ENCODE measurements at regions of chr10 and their contacts with region 1.

Region 1: DNA sequence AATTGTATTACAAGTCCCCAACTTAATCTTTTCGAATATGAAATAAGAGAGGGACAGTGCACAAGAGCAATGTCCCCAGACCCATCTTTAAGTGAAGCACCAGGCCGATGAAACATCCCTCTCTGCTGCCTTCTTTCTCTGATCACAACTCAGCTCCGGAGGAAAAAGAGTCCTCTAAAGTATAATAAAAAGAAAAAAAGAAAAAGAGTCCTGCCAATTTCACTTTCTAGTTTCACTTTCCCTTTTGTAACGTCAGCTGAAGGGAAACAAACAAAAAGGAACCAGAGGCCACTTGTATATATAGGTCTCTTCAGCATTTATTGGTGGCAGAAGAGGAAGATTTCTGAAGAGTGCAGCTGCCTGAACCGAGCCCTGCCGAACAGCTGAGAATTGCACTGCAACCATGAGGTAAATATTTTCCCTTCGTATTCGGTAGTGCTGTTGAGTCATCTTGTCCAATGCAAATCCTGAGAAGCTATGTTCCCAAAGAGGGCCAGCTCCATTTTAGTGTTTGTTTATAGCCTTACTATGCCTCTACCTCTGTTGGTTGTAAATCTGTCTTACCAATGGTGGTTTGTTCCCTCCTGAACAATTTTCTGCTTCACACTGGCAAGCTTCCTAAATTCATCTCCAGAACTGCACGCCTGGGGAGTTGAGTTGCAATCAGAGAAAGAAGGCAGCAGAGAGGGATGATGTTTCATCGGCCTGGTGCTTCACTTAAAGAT is at the start of gene IFIT2:
- DNase-seq: peak; percentile 52 to 70 (median 62)
- H3K4me3 ChIP-seq: peak within 1 kb of the TSS; percentile 63 to 69
- H3K4me3 Mint-ChIP-seq: peak within 1 kb of the TSS; percentile 90 to 98 (median 94)
- H3K27ac ChIP-seq: peak within 1 kb of the TSS; percentile 75
- H3K27ac Mint-ChIP-seq: peak within 1 kb of the TSS; percentile 96 to 99 (median 98)
- H3K4me1 ChIP-seq: peaks cover 30% of the 10 kb centered on the region
- H3K4me1 Mint-ChIP-seq: peaks cover 22 to 40% (median 28%) of the 10 kb centered on the region in 4 donors
- H3K27me3 ChIP-seq: no peaks in the 10 kb centered on the region
- H3K27me3 Mint-ChIP-seq: no peaks in the 10 kb centered on the region
- total RNA-seq, gene IFIT2: 10.4 to 10.7 TPM

Region 2: DNA sequence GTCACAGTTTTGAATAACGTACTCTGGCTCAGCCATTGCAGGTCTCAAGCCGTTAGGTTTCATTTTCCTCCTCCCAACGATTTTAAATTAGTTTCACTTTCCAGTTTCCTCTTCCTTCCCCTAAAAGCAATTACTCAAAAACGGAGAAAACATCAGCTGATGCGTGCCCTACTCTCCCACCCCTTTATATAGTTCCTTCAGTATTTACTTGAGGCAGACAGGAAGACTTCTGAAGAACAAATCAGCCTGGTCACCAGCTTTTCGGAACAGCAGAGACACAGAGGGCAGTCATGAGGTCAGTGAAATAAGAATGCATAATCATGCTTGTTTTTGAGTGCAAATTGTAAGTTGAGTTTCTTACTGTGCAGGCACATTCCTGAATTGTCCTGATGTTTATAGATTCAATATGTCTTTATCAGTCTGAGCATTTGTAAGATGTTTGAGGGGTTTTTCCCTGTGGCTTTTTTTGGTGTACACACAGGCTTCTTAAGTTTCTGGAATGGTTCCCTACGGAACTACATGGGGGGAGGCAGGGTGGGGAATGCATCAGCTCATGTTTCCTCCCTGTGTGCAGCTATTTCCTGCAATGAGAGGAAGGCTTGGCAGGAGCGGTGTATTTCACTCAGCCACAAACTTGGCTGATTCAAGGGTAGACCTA is 26.0 kb after region 1 on chr10 and contains the start of gene IFIT3:
- CTCF ChIA-PET with region 1: interaction called, 6 read pairs
- POLR2A ChIA-PET with region 1: interaction called, 16 read pairs
- intact Hi-C with region 1: loop called (anchors 1 kb)
- DNase-seq: peak in 4 of 5 donors; percentile 26 to 37 (median 36)
- H3K4me3 ChIP-seq: peak within 1 kb of the TSS; percentile 24 to 55
- H3K4me3 Mint-ChIP-seq: peak within 1 kb of the TSS; percentile 80 to 97 (median 92)
- H3K27ac ChIP-seq: peak within 1 kb of the TSS; percentile 27
- H3K27ac Mint-ChIP-seq: peak within 1 kb of the TSS; percentile 24 to 96 (median 85)
- H3K4me1 ChIP-seq: peaks cover 50% of the 10 kb centered on the region
- H3K4me1 Mint-ChIP-seq: peaks cover 36 to 61% (median 42%) of the 10 kb centered on the region in 4 donors
- H3K27me3 ChIP-seq: no peaks in the 10 kb centered on the region
- H3K27me3 Mint-ChIP-seq: peaks cover 0 to 4% of the 10 kb centered on the region in 2 donors
- total RNA-seq, gene IFIT3: 3.1 to 3.3 TPM

Region 3: DNA sequence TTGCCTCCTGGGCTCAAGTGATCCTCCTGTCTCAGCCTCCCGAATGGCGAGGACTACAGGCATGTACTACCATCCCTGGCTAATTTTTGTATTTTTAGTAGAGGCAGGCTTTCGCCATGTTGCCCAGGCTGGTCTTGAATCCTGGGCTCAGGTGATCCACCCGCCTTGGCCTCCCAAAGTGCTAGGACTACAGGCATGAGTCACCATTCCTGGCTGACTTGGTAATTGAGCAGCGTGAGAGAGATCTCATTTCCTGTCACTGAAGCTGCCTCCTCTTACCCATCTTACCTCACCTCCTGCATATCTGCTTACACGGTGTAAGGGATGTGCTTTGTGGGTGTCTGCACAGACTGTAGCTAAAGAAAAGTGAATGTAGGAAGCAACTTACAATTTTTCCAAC is 35.6 kb after region 1 on chr10:
- CTCF ChIA-PET with region 1: interaction called, 6 read pairs
- POLR2A ChIA-PET with region 1: interaction called, 10 read pairs
- intact Hi-C with region 1: no loop called
- DNase-seq: peak in 3 of 5 donors; percentile 20 to 71 (median 24)
- H3K4me3 ChIP-seq: no peak overlapping the region
- H3K4me3 Mint-ChIP-seq: peak overlapping the region in 2 of 8 donors; percentile 40 to 48
- H3K27ac ChIP-seq: no peak overlapping the region
- H3K27ac Mint-ChIP-seq: peak overlapping the region in 5 of 7 donors; percentile 66 to 82 (median 81)
- H3K4me1 ChIP-seq: peaks cover 45% of the 10 kb centered on the region
- H3K4me1 Mint-ChIP-seq: peaks cover 27 to 45% (median 39%) of the 10 kb centered on the region in 4 donors
- H3K27me3 ChIP-seq: no peaks in the 10 kb centered on the region
- H3K27me3 Mint-ChIP-seq: no peaks in the 10 kb centered on the region

Region 4: GRCh38 chr10:89391917-89392756 is 90.3 kb after region 1 on chr10 and contains the start of gene IFIT1:
- CTCF ChIA-PET with region 1: interaction called, 8 read pairs
- POLR2A ChIA-PET with region 1: interaction called, 23 read pairs
- intact Hi-C with region 1: loop called (anchors 1 kb)
- DNase-seq: peak; percentile 57 to 81 (median 79)
- H3K4me3 ChIP-seq: peak within 1 kb of the TSS; percentile 69 to 82
- H3K4me3 Mint-ChIP-seq: peak within 1 kb of the TSS; percentile 85 to 97 (median 94)
- H3K27ac ChIP-seq: peak within 1 kb of the TSS; percentile 68
- H3K27ac Mint-ChIP-seq: peak within 1 kb of the TSS; percentile 76 to 98 (median 95)
- H3K4me1 ChIP-seq: peaks cover 31% of the 10 kb centered on the region
- H3K4me1 Mint-ChIP-seq: peaks cover 13 to 35% (median 31%) of the 10 kb centered on the region in 4 donors
- H3K27me3 ChIP-seq: no peaks in the 10 kb centered on the region
- H3K27me3 Mint-ChIP-seq: no peaks in the 10 kb centered on the region
- total RNA-seq, gene IFIT1: 5.1 to 6.3 TPM

Measured in CD4-positive, alpha-beta memory T cell (primary cell).